Posterior cingulate gyrus (tissue), 11 donors: ENCODE measurements at regions of chr9 and their contacts with region 1.

Region 1: GRCh38 chr9:95478335-95478734 is 38.4 kb downstream of the PTCH1 start:
- DNase-seq: peak in 2 of 10 donors; percentile 32 to 48

Region 2: GRCh38 chr9:95462249-95463147 is 15.8 kb before region 1 on chr9:
- intact Hi-C with region 1: loop called (anchors 2 kb)
- DNase-seq: peak; percentile 60 to 96 (median 78)